CD8-positive, alpha-beta T cell (primary cell): ENCODE measurements at regions of chr18 and their contacts with region 1.

Region 1: GRCh38 chr18:70720607-70721006 is 431.8 kb downstream of the SOCS6 start:
- DNase-seq: no peak
- ATAC-seq: no peak
- H3K4me3 ChIP-seq: no peak overlapping the region
- H3K4me3 Mint-ChIP-seq: no peak overlapping the region
- H3K27ac ChIP-seq: no peak overlapping the region
- H3K27ac Mint-ChIP-seq: no peak overlapping the region
- H3K4me1 ChIP-seq: no peaks in the 10 kb centered on the region
- H3K4me1 Mint-ChIP-seq: peaks cover 2% of the 10 kb centered on the region
- H3K27me3 ChIP-seq: no peaks in the 10 kb centered on the region
- H3K27me3 Mint-ChIP-seq: no peaks in the 10 kb centered on the region
- CTCF ChIP-seq: no peak

Region 2: GRCh38 chr18:69817335-69817940 is 903.2 kb before region 1 on chr18:
- CTCF ChIA-PET with region 1: no interaction called
- POLR2A ChIA-PET with region 1: no interaction called
- intact Hi-C with region 1: no loop called
- DNase-seq: no peak
- ATAC-seq: no peak
- H3K4me3 ChIP-seq: no peak overlapping the region
- H3K4me3 Mint-ChIP-seq: no peak overlapping the region
- H3K27ac ChIP-seq: no peak overlapping the region
- H3K27ac Mint-ChIP-seq: no peak overlapping the region
- H3K4me1 ChIP-seq: no peaks in the 10 kb centered on the region
- H3K4me1 Mint-ChIP-seq: no peaks in the 10 kb centered on the region
- H3K27me3 ChIP-seq: no peaks in the 10 kb centered on the region
- H3K27me3 Mint-ChIP-seq: no peaks in the 10 kb centered on the region
- CTCF ChIP-seq: no peak

Region 3: GRCh38 chr18:70491734-70492348 is 228.8 kb before region 1 on chr18:
- CTCF ChIA-PET with region 1: no interaction called
- POLR2A ChIA-PET with region 1: no interaction called
- intact Hi-C with region 1: no loop called
- DNase-seq: peak in 8 of 9 experiments; percentile 24 to 63 (median 48)
- ATAC-seq: peak; percentile 61
- H3K4me3 ChIP-seq: no peak overlapping the region
- H3K4me3 Mint-ChIP-seq: no peak overlapping the region
- H3K27ac ChIP-seq: no peak overlapping the region
- H3K27ac Mint-ChIP-seq: no peak overlapping the region
- H3K4me1 ChIP-seq: peaks cover 5% of the 10 kb centered on the region
- H3K4me1 Mint-ChIP-seq: peaks cover 14% of the 10 kb centered on the region
- H3K27me3 ChIP-seq: no peaks in the 10 kb centered on the region
- H3K27me3 Mint-ChIP-seq: no peaks in the 10 kb centered on the region
- CTCF ChIP-seq: peak; percentile 85

Region 4: GRCh38 chr18:70732916-70733315 is 12.3 kb after region 1 on chr18:
- CTCF ChIA-PET with region 1: no interaction called
- POLR2A ChIA-PET with region 1: interaction called, 3 read pairs
- intact Hi-C with region 1: loop called in 1 of 2 experiments (anchors 1 kb)
- DNase-seq: no peak
- ATAC-seq: no peak
- H3K4me3 ChIP-seq: no peak overlapping the region
- H3K4me3 Mint-ChIP-seq: no peak overlapping the region
- H3K27ac ChIP-seq: no peak overlapping the region
- H3K27ac Mint-ChIP-seq: no peak overlapping the region
- H3K4me1 ChIP-seq: no peaks in the 10 kb centered on the region
- H3K4me1 Mint-ChIP-seq: peaks cover 9% of the 10 kb centered on the region
- H3K27me3 ChIP-seq: no peaks in the 10 kb centered on the region
- H3K27me3 Mint-ChIP-seq: no peaks in the 10 kb centered on the region
- CTCF ChIP-seq: no peak